Sciatic nerve (tissue), 2 donors: ENCODE measurements at regions of chr17 and their contacts with region 1.

Region 1: GRCh38 chr17:64262417-64263260 is at the start of gene TEX2:
- DNase-seq: peak; percentile 77
- ATAC-seq: peak; percentile 55
- total RNA-seq, gene TEX2: 39.5 TPM

Region 2: GRCh38 chr17:62614142-62614541 is 1648.5 kb before region 1 on chr17:
- intact Hi-C with region 1: no loop called
- DNase-seq: no peak
- ATAC-seq: peak; percentile 16

Region 3: GRCh38 chr17:64155751-64156544 is 106.7 kb before region 1 on chr17:
- intact Hi-C with region 1: loop called (anchors 10 kb)
- DNase-seq: peak; percentile 76
- ATAC-seq: peak; percentile 95